A673 (cell line): ENCODE measurements at regions of chrX and their contacts with region 1.

Region 1: DNA sequence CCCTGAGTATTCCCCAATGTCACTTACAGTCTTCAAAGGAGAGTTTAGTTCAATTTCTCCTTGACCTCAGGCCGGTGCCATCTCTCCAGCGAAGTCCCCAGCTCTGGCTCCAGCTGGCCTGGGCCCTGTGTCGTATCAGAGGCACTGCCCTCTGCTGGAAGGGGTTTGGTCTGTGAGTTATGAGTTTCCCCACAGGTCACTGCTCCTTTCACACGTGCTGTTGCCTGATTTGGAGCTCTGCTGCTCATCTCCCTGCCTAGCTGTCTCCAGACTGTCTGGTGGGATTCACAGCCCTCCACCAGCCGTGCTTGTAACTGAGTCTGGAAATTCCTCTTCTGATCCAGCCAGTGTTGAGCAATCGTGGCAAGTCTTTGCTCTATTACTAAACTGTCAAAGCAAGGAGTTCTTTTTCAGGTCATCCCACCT is at the start of gene RAP2C:
- DNase-seq: peak; percentile 62
- H3K4me3 ChIP-seq: peak within 1 kb of the TSS; percentile 68
- H3K27ac ChIP-seq: peak within 1 kb of the TSS; percentile 81
- H3K4me1 ChIP-seq: peaks cover 5% of the 10 kb centered on the region
- H3K27me3 ChIP-seq: peaks cover 5% of the 10 kb centered on the region
- CTCF ChIP-seq: peak; percentile 57
- total RNA-seq, gene RAP2C: 20.8 and 21.4 TPM in 2 replicates

Region 2: DNA sequence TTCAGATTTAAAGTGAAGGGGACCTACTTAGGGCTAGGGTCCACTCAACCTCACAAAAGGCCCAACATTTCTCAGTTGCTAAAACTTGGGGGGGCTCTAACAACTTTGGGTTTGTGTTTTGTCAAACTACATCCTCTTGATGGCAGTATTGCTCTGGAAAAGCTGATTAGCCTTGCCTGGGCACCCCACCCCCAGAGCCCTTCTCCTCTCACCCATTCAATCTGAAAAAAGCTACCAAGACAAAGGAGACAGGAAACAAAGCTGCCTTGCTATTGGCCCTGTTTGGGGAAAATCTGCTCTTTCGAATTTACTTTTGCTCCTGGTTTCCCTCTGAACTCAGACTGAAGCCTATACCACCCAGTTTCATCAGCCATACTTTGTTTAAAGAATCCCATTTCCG is 391.4 kb before region 1 on chrX:
- CTCF ChIA-PET with region 1: no interaction called
- POLR2A ChIA-PET with region 1: no interaction called
- intact Hi-C with region 1: loop called (anchors 5 kb)
- DNase-seq: peak; percentile 75
- H3K4me3 ChIP-seq: peak overlapping the region; percentile 40
- H3K27ac ChIP-seq: no peak overlapping the region
- H3K4me1 ChIP-seq: peaks cover 6% of the 10 kb centered on the region
- H3K27me3 ChIP-seq: peaks cover 5% of the 10 kb centered on the region
- CTCF ChIP-seq: peak; percentile 52

Region 3: GRCh38 chrX:132092439-132093065 is 126.8 kb before region 1 on chrX:
- CTCF ChIA-PET with region 1: interaction called, 13 read pairs
- POLR2A ChIA-PET with region 1: no interaction called
- intact Hi-C with region 1: loop called (anchors 1 kb)
- DNase-seq: peak; percentile 73
- H3K4me3 ChIP-seq: no peak overlapping the region
- H3K27ac ChIP-seq: no peak overlapping the region
- H3K4me1 ChIP-seq: no peaks in the 10 kb centered on the region
- H3K27me3 ChIP-seq: peaks cover 29% of the 10 kb centered on the region
- CTCF ChIP-seq: peak; percentile 74

Region 4: GRCh38 chrX:132367984-132368756 is 148.8 kb after region 1 on chrX:
- CTCF ChIA-PET with region 1: no interaction called
- POLR2A ChIA-PET with region 1: no interaction called
- intact Hi-C with region 1: no loop called
- DNase-seq: no peak
- H3K4me3 ChIP-seq: no peak overlapping the region
- H3K27ac ChIP-seq: no peak overlapping the region
- H3K4me1 ChIP-seq: no peaks in the 10 kb centered on the region
- H3K27me3 ChIP-seq: peaks cover 14% of the 10 kb centered on the region
- CTCF ChIP-seq: no peak